PC-3 (cell line): ENCODE measurements at regions of chr2 and their contacts with region 1.

Region 1: DNA sequence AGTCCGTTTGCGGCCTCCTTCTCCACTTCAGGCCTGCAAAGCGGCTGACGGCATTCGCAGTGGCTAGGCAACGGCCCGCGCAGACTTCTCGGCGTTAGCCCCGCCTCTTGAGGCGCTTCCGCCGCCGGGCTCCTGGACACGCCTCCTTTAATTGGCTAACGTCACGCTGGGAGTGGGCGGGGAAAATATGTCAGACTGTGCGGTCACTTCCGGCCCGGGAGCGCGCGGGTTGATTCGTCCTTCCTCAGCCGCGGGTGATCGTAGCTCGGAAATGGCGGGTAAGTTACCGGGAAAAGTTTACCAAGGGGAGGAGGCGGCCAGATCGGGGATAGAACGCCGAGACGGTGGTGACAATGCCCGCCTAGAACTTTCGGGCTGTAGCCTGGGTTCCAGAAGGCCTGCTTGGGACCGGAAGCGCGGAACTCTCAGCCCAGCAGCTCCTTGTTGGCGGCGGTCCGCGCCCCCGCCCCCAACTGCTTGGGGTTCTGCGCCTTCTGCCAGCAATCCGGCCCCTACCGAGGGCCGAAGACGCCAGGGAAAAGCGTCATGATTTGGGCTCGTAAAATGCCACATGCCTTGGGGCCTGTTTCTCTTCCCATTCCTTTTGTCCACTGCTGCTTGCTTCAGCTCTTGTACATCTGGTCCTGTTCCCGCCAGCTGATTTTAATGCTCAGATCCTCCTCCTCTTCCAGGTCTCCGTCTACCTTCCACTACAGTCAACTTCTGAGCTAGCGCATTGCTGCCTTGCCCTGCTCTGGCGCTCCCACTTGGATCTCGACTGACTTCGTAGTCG is at the start of gene HAT1:
- DNase-seq: peak; percentile 98
- ATAC-seq: peak; percentile 94
- H3K4me3 ChIP-seq: peak within 1 kb of the TSS; percentile 86
- H3K27ac ChIP-seq: peak within 1 kb of the TSS; percentile 72
- H3K4me1 ChIP-seq: peaks cover 19% of the 10 kb centered on the region
- H3K27me3 ChIP-seq: no peaks in the 10 kb centered on the region
- CTCF ChIP-seq: no peak
- total RNA-seq, gene HAT1: 58.7 and 76.8 TPM in 2 replicates

Region 2: GRCh38 chr2:171893824-171894611 is 28.4 kb before region 1 on chr2 and contains the start of gene SLC25A12:
- CTCF ChIA-PET with region 1: no interaction called
- POLR2A ChIA-PET with region 1: no interaction called
- intact Hi-C with region 1: loop called (anchors 2 kb)
- DNase-seq: peak; percentile 87
- ATAC-seq: peak; percentile 93
- H3K4me3 ChIP-seq: peak within 1 kb of the TSS; percentile 99
- H3K27ac ChIP-seq: peak within 1 kb of the TSS; percentile 28
- H3K4me1 ChIP-seq: peaks cover 12% of the 10 kb centered on the region
- H3K27me3 ChIP-seq: no peaks in the 10 kb centered on the region
- CTCF ChIP-seq: no peak
- total RNA-seq, gene SLC25A12: 18.4 and 21.4 TPM in 2 replicates

Region 3: DNA sequence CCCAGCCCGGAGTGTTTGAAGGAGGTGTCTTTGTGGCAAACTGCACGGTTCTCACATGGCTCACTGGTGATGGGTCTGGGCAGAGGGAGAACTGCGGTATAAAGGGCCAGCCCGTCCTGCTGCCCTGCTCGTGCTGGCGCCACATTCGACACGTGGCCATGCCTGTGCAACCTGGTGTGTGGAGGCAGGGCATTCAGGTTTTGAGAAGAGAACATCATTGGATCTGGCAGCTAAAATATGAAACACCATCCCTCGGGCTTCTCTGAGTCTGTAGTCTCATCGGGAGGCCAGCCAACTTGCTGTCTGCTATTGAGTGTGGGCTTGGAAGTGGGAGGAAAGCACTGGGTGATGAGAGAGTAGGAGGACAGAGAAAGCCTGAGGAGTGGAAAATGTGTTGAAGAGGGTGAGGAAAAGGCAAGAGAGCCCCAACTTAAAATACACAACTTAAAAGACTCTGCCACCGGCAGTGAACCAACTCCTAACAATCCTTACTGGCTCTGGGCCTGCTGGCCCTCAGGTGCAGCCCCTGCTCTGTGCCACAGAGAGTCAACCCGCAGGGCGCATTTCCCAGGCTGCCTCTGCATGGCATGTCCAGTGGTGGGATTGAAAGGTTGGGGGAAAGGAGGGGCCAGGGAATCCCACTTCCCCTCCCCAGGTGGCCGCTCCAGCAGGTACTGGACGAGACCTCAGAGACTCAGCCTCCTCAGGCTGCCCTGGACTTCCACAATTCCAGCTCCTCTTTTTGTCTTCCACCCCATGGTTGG is 292.9 kb after region 1 on chr2:
- CTCF ChIA-PET with region 1: no interaction called
- POLR2A ChIA-PET with region 1: no interaction called
- intact Hi-C with region 1: no loop called
- DNase-seq: no peak
- ATAC-seq: no peak
- H3K4me3 ChIP-seq: no peak overlapping the region
- H3K27ac ChIP-seq: no peak overlapping the region
- H3K4me1 ChIP-seq: no peaks in the 10 kb centered on the region
- H3K27me3 ChIP-seq: no peaks in the 10 kb centered on the region
- CTCF ChIP-seq: no peak